ENCODE measurements at regions of chr10 and their contacts with region 1.

Region 1: DNA sequence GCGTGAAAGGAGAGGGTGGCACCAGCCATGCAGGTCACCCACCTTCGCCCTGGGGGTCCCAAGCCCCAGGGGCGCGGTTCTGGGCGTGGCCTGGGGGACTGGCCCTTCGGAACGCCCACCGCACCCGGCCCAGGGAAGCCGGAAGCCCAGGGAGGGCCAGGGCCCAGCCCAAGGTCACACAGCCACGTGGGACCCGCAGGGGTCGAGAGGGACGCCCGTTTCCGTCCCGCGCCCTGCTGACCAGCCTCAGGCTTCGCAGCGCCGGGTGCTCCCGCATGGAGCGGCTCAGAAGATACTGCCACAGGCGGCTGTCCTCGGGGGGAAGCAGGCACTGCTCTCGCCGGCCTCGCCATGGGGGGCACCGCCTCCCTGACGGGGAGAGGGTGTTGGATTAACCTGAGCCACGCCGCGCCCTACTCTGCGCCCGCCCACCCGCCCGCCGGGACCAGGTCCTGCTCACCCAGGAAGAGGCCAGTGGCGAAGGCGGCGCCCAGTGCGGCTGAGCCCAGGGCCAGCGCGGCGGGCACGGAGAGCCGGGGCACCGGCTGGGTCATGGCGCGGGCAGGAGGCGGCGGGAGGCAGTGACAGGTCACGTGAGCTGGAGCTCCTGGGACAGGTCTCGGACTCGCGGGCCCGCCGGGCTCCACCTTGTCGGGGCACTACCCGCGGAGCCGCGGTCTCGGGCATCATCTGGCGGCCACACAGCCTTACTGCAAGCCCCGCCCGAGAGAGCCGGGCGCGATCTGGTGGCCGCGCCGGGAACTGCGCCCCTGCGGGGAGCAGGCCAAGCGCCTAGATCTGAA is at the start of gene COMTD1:
- DNase-seq: peak; percentile 92
- H3K4me3 ChIP-seq: peak within 1 kb of the TSS; percentile 62
- H3K27ac ChIP-seq: no peak within 1 kb of the TSS
- H3K4me1 ChIP-seq: peaks cover 27% of the 10 kb centered on the region
- H3K27me3 ChIP-seq: no peaks in the 10 kb centered on the region
- CTCF ChIP-seq: peak; percentile 100
- total RNA-seq, gene COMTD1: 3.4 and 3.8 TPM in 2 replicates

Region 2: DNA sequence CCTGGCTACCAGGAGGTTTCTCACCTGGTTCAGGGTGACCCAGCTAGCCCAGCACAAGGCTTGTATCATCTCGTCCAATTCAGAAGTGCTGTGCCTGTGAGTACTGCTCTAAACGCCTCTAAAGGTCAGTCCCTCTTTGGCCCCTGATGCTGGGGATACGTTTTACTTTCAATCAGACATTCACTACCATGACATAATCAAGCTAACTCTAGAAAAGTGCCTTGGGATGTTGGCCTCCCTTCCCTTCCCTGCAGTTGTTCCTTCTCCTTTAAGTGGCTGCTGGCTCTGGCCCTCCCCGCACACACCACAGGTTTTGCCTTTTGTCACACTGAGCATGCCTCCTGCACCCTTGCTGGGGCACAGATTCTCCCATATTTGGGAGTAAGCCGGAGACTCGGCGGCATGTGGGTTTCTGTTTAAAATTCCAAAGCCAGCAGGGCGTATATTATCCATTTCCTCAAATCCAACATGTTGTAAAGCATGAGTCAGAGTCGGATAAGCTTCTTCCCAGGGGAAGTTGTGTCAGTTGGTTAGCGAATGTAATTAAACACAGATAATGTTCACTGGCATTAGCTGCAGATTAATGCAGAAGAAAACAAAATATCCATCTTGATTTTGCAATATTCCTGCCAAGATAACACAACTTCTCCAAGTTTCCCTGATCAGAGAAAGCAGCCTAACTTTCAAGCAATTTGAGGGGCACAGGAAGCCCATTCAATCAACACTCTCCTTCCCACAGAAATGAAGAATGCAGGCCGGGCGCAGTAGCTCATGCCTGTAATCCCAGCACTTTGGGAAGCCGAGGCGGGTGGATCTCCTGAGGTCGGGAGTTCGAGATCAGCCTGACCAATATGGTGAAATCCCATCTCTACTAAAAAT is 1269.4 kb before region 1 on chr10:
- CTCF ChIA-PET with region 1: no interaction called
- POLR2A ChIA-PET with region 1: interaction called, 12 read pairs
- intact Hi-C with region 1: no loop called
- DNase-seq: peak; percentile 100
- H3K4me3 ChIP-seq: no peak overlapping the region
- H3K27ac ChIP-seq: peak overlapping the region; percentile 98
- H3K4me1 ChIP-seq: peaks cover 46% of the 10 kb centered on the region
- H3K27me3 ChIP-seq: no peaks in the 10 kb centered on the region
- CTCF ChIP-seq: no peak

Region 3: DNA sequence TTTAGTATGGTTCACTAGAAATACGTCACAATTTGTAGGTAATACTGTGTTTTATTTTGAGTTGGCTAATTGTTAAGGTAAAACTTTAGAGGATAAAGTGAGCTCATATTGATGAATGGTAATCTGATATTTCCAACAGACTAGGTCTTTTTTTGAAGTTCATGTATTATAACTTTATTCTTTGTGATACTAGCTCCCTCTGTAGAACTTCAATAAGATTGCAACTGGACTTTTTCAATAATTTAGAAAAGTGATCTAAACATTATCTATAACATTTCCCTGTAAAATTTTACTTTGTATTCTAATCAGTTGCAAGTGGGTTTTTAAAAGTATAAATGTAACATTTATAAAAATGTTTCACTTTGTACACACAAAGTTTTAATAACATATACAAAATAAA is 1001.0 kb before region 1 on chr10:
- CTCF ChIA-PET with region 1: no interaction called
- POLR2A ChIA-PET with region 1: no interaction called
- intact Hi-C with region 1: loop called (anchors 5 kb)
- DNase-seq: no peak
- H3K4me3 ChIP-seq: no peak overlapping the region
- H3K27ac ChIP-seq: no peak overlapping the region
- H3K4me1 ChIP-seq: peaks cover 29% of the 10 kb centered on the region
- H3K27me3 ChIP-seq: no peaks in the 10 kb centered on the region
- CTCF ChIP-seq: peak; percentile 65

Region 4: GRCh38 chr10:74826142-74827044 is 409.2 kb before region 1 on chr10 and contains the start of gene KAT6B:
- CTCF ChIA-PET with region 1: no interaction called
- POLR2A ChIA-PET with region 1: no interaction called
- intact Hi-C with region 1: loop called (anchors 5 kb)
- DNase-seq: peak; percentile 100
- H3K4me3 ChIP-seq: peak within 1 kb of the TSS; percentile 93
- H3K27ac ChIP-seq: peak within 1 kb of the TSS; percentile 97
- H3K4me1 ChIP-seq: peaks cover 17% of the 10 kb centered on the region
- H3K27me3 ChIP-seq: peaks cover 4% of the 10 kb centered on the region
- CTCF ChIP-seq: peak; percentile 46; the same call in 1 of the 2 replicates
- total RNA-seq, gene KAT6B: 21.8 and 22.2 TPM in 2 replicates

Region 5: GRCh38 chr10:75062506-75063299 is 172.9 kb before region 1 on chr10:
- CTCF ChIA-PET with region 1: no interaction called
- POLR2A ChIA-PET with region 1: no interaction called
- intact Hi-C with region 1: no loop called
- DNase-seq: peak; percentile 14
- H3K4me3 ChIP-seq: no peak overlapping the region
- H3K27ac ChIP-seq: no peak overlapping the region
- H3K4me1 ChIP-seq: no peaks in the 10 kb centered on the region
- H3K27me3 ChIP-seq: no peaks in the 10 kb centered on the region
- CTCF ChIP-seq: no peak

Region 6: DNA sequence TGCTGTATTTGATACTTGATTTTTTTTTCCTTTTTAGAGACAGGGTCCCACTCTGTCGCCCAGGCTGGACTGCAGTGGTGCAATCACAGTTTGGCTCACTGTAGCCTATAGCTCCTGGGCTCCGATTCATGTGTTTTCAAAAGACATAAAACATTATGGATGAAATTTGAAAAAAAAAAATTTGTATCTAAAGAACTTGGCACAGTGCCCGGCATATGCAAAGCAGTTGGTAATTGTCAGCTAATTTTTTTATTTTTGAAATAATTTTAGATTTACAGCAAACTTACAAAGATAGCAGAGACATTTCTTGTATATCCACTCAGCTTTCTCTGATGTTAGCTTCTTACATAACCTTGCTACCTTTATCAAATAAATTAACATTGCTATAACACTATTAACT is 144.4 kb before region 1 on chr10:
- CTCF ChIA-PET with region 1: no interaction called
- POLR2A ChIA-PET with region 1: no interaction called
- intact Hi-C with region 1: no loop called
- DNase-seq: no peak
- H3K4me3 ChIP-seq: no peak overlapping the region
- H3K27ac ChIP-seq: no peak overlapping the region
- H3K4me1 ChIP-seq: no peaks in the 10 kb centered on the region
- H3K27me3 ChIP-seq: no peaks in the 10 kb centered on the region
- CTCF ChIP-seq: no peak

Region 7: GRCh38 chr10:75187961-75188426 is 47.6 kb before region 1 on chr10:
- CTCF ChIA-PET with region 1: interaction called, 10 read pairs
- POLR2A ChIA-PET with region 1: no interaction called
- intact Hi-C with region 1: loop called (anchors 1 kb)
- DNase-seq: peak; percentile 55
- H3K4me3 ChIP-seq: no peak overlapping the region
- H3K27ac ChIP-seq: no peak overlapping the region
- H3K4me1 ChIP-seq: no peaks in the 10 kb centered on the region
- H3K27me3 ChIP-seq: no peaks in the 10 kb centered on the region
- CTCF ChIP-seq: peak; percentile 68

Region 8: GRCh38 chr10:75250910-75251309 is 15.3 kb after region 1 on chr10:
- CTCF ChIA-PET with region 1: interaction called, 7 read pairs
- POLR2A ChIA-PET with region 1: interaction called, 10 read pairs
- intact Hi-C with region 1: no loop called
- DNase-seq: no peak
- H3K4me3 ChIP-seq: no peak overlapping the region
- H3K27ac ChIP-seq: no peak overlapping the region
- H3K4me1 ChIP-seq: no peaks in the 10 kb centered on the region
- H3K27me3 ChIP-seq: no peaks in the 10 kb centered on the region
- CTCF ChIP-seq: no peak

Region 9: GRCh38 chr10:75401569-75402485 is 166.3 kb after region 1 on chr10 and contains the start of gene ZNF503:
- CTCF ChIA-PET with region 1: no interaction called
- POLR2A ChIA-PET with region 1: no interaction called
- intact Hi-C with region 1: no loop called
- DNase-seq: peak; percentile 94
- H3K4me3 ChIP-seq: peak within 1 kb of the TSS; percentile 57
- H3K27ac ChIP-seq: no peak within 1 kb of the TSS
- H3K4me1 ChIP-seq: peaks cover 32% of the 10 kb centered on the region
- H3K27me3 ChIP-seq: peaks cover 99% of the 10 kb centered on the region
- CTCF ChIP-seq: no peak
- total RNA-seq, gene ZNF503: 1.2 TPM in 2 replicates

Measured in A673 (cell line).